Thyroid gland (tissue), 4 donors: ENCODE measurements at regions of chr9 and their contacts with region 1.

Region 1: GRCh38 chr9:128504485-128505413 is at the start of gene GLE1:
- DNase-seq: peak; percentile 95 to 97
- H3K4me3 ChIP-seq: peak within 1 kb of the TSS; percentile 55 to 87 (median 78)
- H3K27ac ChIP-seq: peak within 1 kb of the TSS in 2 of 3 donors; percentile 14 to 50
- H3K4me1 ChIP-seq: peaks cover 2 to 11% of the 10 kb centered on the region in 2 donors
- H3K27me3 ChIP-seq: no peaks in the 10 kb centered on the region
- CTCF ChIP-seq: peak in 2 of 6 experiments; percentile 9 to 15
- POLR2A ChIP-seq: peak; percentile 25 to 73
- total RNA-seq, gene GLE1: 24.1 to 30.3 (median 25.5) TPM

Region 2: DNA sequence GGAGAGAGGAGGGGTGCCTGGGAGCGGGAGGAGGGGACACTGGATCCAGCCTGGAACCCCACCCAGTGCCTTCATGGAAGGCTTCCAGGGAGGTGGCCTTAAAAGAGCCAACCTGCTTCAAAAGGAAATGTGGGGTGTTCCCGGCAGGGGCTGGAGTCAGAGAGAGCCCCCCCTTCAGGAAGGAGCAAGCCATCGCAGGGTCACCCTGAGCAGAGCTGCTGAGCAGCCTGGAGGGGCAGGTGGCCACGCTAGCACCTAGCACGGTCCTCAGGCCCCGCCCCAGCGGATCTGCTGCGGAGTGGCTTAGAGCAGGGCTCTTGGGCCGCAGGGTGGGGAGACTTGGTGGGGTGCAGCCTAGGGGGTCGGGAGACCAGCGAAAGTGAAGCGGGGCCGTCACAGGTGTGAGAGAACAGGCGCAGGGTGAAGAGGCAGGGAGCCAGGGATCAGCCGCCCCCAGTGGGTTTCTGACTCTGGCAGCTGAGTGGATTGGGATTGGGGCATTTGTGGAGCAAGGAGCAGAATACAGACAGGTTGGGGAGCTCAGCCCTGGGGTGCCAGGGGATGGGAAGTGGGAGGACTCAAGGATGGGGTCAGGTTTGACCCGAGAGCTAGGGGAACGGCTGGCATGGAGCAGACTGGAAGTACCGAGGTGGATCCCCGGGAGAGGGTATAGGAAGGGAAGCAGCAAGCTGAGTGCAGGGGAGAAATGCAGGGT is 354.0 kb before region 1 on chr9:
- intact Hi-C with region 1: no loop called
- DNase-seq: no peak
- H3K4me3 ChIP-seq: no peak overlapping the region
- H3K27ac ChIP-seq: no peak overlapping the region
- H3K4me1 ChIP-seq: peaks cover 13 to 28% of the 10 kb centered on the region in 2 donors
- H3K27me3 ChIP-seq: no peaks in the 10 kb centered on the region
- CTCF ChIP-seq: no peak
- POLR2A ChIP-seq: no peak

Region 3: GRCh38 chr9:128190516-128191405 is 314.0 kb before region 1 on chr9:
- intact Hi-C with region 1: no loop called
- DNase-seq: no peak
- H3K4me3 ChIP-seq: peak overlapping the region; percentile 82 to 94 (median 89)
- H3K27ac ChIP-seq: peak overlapping the region; percentile 66 to 75 (median 74)
- H3K4me1 ChIP-seq: peaks cover 10 to 16% of the 10 kb centered on the region in 2 donors
- H3K27me3 ChIP-seq: no peaks in the 10 kb centered on the region
- CTCF ChIP-seq: no peak
- POLR2A ChIP-seq: no peak

Region 4: DNA sequence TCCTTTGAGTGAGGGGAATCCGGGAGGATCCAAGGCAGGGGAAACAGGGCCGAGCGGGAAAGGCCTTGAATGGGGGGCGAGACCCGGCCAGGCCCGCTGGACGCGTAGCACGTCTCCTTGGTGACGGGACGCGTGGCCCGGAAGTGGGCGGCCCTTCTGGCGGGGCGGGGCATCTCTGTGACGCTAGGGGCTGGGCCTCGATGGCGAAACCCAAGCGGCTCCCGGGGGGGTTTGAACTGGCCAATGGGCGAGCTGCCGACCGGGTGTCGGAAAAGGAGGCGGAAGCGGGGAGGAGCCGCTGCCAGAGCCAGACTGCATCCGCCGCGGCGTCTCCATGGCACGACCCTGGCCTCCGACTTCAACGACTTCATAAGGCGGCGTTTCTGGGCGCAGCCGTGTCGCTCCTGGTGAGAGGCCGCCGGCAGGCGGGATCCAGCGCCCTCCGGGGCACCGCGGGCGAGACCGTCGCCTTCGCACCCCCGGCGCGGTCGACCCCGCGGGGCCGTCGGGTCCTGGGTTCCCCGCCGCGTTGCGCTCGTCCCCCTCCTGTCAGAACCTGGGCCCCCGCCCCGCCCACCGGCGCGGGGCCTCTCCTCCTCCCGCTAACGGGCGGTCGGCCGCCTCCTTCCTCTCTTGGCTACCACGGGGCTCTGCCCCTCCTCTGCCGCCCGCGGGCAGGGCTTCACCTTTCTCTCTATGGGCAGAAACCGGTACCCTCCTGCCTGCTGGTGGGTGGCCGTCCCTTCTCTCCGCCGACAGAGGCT is 48.7 kb before region 1 on chr9 and contains the start of gene ODF2:
- intact Hi-C with region 1: loop called (anchors 10 kb)
- DNase-seq: peak; percentile 98
- H3K4me3 ChIP-seq: peak within 1 kb of the TSS; percentile 24 to 90 (median 70)
- H3K27ac ChIP-seq: peak within 1 kb of the TSS; percentile 30 to 81 (median 49)
- H3K4me1 ChIP-seq: peaks cover 6% of the 10 kb centered on the region in 2 donors
- H3K27me3 ChIP-seq: no peaks in the 10 kb centered on the region
- CTCF ChIP-seq: no peak
- POLR2A ChIP-seq: peak in 1 of 2 donors; percentile 73
- total RNA-seq, gene ODF2: 21.9 to 25.5 (median 22.4) TPM

Region 5: DNA sequence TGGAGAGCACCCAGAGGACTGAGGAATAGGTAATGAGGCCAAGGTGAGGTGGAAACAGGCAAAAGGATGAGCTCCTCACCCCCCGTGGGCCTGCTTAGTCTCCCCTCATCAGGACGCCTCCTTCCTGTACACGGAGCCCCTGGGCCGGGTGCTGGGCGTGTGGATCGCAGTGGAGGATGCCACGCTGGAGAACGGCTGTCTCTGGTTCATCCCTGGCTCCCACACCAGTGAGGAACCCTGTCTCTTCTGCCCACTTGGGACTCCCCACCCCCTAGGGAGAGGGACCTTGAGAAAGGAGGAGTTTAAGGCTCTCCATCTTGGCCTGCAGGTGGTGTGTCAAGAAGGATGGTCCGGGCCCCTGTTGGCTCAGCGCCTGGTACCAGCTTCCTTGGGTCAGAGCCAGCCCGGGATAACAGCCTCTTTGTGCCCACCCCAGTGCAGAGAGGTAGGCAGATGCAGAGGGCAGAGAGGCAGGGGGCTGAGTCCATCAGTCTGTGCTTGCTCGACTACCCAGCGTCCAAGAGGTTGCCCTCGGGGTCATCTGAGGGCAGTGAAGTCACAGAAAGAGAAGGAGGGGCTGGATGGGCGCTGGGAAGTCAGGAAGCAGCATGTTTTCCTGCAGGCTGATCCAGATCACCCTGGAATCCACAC is 435.6 kb after region 1 on chr9:
- intact Hi-C with region 1: no loop called
- DNase-seq: no peak
- H3K4me3 ChIP-seq: no peak overlapping the region
- H3K27ac ChIP-seq: peak overlapping the region in 2 of 3 donors; percentile 24 to 73
- H3K4me1 ChIP-seq: peaks cover 0 to 13% of the 10 kb centered on the region in 2 donors
- H3K27me3 ChIP-seq: no peaks in the 10 kb centered on the region
- CTCF ChIP-seq: no peak
- POLR2A ChIP-seq: no peak